ENCODE measurements at regions of chr1 and their contacts with region 1.

Region 1: GRCh38 chr1:213015099-213016050 is at the start of gene ANGEL2:
- DNase-seq: peak; percentile 92 to 96
- ATAC-seq: peak; percentile 99 to 100
- H3K4me3 ChIP-seq: peak within 1 kb of the TSS; percentile 64 to 96 (median 90)
- H3K27ac ChIP-seq: peak within 1 kb of the TSS; percentile 81 to 92 (median 86)
- H3K4me1 ChIP-seq: peaks cover 16 to 20% of the 10 kb centered on the region in 2 donors
- H3K27me3 ChIP-seq: no peaks in the 10 kb centered on the region
- CTCF ChIP-seq: no peak
- POLR2A ChIP-seq: peak in 1 of 2 donors; percentile 27
- total RNA-seq, gene ANGEL2: 17.7 to 33.2 (median 25.1) TPM

Region 2: GRCh38 chr1:212857992-212858460 is 157.3 kb before region 1 on chr1 and contains the start of gene FLVCR1:
- in situ Hi-C with region 1: no loop called
- intact Hi-C with region 1: loop called (anchors 5 kb)
- DNase-seq: peak; percentile 94
- ATAC-seq: peak; percentile 97 to 98
- H3K4me3 ChIP-seq: peak within 1 kb of the TSS; percentile 86 to 98 (median 96)
- H3K27ac ChIP-seq: peak within 1 kb of the TSS; percentile 84 to 87 (median 86)
- H3K4me1 ChIP-seq: peaks cover 7 to 14% of the 10 kb centered on the region in 2 donors
- H3K27me3 ChIP-seq: no peaks in the 10 kb centered on the region
- CTCF ChIP-seq: no peak
- POLR2A ChIP-seq: peak; percentile 59 to 75
- total RNA-seq, gene FLVCR1: 0.66 to 19.8 (median 1.7) TPM

Region 3: DNA sequence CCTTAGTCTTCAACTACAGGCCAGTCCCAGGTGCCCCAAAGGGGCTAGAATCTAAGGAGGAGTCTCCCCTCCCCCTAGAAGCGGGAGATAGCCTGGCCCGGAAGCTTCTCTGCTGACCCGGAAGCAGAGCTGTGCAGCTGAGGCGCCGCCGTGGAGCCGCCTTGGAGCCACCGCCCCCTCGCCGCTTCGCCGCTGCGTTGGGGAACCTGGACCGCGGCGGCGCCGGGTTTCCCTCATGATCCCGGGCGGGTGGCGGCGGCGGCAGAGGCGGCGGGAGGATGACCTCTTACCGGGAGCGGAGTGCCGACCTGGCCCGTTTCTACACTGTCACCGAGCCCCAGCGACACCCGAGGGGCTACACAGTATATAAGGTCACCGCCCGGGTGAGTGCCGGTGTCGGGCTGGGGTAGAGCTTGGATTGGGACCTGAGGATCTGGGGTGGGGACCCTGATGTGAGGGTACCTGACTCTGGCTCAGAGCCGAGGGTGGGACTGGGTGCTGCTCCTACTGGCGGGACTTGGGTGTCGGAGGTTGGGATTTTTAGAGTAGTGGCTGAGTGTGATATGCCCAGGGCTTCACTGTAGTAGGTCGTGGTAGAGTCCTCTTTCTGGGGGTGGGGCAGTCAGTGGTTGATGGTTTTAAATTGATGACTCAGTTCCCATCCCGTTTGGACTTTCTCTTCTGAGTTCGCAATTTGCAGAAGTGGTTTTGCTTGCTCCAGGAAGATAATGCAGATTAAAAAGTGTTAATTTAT is 35.9 kb after region 1 on chr1 and contains the start of gene RPS6KC1:
- in situ Hi-C with region 1: no loop called
- intact Hi-C with region 1: loop called (anchors 2 kb)
- DNase-seq: peak; percentile 58 to 74
- ATAC-seq: peak; percentile 98 to 99
- H3K4me3 ChIP-seq: peak within 1 kb of the TSS; percentile 89 to 97 (median 95)
- H3K27ac ChIP-seq: peak within 1 kb of the TSS; percentile 73 to 89 (median 84)
- H3K4me1 ChIP-seq: peaks cover 17 to 20% of the 10 kb centered on the region in 2 donors
- H3K27me3 ChIP-seq: peaks cover 4 to 15% (median 4%) of the 10 kb centered on the region in 3 donors
- CTCF ChIP-seq: peak in 2 of 5 experiments; percentile 5 to 27
- POLR2A ChIP-seq: peak; percentile 21 to 40
- total RNA-seq, gene RPS6KC1: 14.5 to 22.2 (median 16.2) TPM

Measured in gastrocnemius medialis (tissue), 4 donors.